ENCODE measurements at regions of chr18 and their contacts with region 1.

Region 1: DNA sequence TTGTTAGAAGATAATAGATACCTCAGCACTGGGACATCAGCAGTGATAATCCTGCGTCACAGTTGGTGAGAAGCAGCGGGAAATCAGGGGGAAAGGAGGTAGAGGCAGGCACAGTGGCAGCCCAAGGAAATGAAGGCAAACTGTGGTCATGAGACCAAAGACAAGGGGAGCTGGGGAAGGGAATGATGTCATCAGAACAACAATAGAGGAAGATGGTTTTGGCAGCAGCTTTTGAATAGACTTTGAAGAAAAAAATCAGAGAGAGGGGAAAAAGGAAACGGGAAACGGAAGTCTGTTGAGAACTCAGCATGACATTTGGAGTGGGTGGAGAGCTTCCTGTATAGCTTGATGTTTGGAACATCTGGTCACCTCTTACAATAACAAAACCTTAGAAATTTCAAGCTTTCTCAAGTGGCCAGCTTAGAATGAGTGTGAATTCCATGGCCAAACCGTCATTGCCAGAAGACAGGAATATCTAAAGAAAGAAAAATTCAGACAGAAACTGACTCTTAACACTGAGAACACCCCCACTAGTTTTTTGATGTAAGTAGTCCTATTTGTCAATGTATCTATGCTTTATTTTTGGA is 18.4 kb upstream of the YES1 start:
- DNase-seq: no peak
- ATAC-seq: peak; percentile 57
- H3K4me3 Mint-ChIP-seq: peak overlapping the region; percentile 43
- H3K27ac Mint-ChIP-seq: peak overlapping the region; percentile 73
- H3K4me1 Mint-ChIP-seq: peaks cover 17% of the 10 kb centered on the region
- H3K27me3 Mint-ChIP-seq: peaks cover 7% of the 10 kb centered on the region

Region 2: DNA sequence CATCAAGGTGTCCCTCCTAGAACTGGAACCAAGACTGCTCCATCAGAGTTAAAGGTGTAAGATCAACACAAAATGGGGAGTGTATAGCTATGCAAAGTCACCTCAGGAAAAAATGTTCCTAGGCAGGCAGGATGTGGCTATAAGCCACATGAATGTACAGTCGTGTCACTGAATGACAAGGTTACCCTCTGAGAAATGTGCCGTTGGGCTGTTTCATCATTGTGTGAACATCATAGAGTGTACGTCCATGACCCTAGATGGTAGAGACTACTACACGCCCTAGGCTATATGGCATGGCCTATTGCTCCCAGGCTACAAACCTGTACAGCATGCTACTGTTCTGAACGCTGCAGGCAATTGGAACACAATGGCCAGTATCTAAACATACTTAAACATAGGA is 148.4 kb before region 1 on chr18:
- CTCF ChIA-PET with region 1: interaction called, 10 read pairs
- DNase-seq: peak; percentile 91
- ATAC-seq: peak; percentile 97
- H3K4me3 Mint-ChIP-seq: peak overlapping the region; percentile 19
- H3K27ac Mint-ChIP-seq: peak overlapping the region; percentile 90
- H3K4me1 Mint-ChIP-seq: peaks cover 35% of the 10 kb centered on the region
- H3K27me3 Mint-ChIP-seq: no peaks in the 10 kb centered on the region

Region 3: DNA sequence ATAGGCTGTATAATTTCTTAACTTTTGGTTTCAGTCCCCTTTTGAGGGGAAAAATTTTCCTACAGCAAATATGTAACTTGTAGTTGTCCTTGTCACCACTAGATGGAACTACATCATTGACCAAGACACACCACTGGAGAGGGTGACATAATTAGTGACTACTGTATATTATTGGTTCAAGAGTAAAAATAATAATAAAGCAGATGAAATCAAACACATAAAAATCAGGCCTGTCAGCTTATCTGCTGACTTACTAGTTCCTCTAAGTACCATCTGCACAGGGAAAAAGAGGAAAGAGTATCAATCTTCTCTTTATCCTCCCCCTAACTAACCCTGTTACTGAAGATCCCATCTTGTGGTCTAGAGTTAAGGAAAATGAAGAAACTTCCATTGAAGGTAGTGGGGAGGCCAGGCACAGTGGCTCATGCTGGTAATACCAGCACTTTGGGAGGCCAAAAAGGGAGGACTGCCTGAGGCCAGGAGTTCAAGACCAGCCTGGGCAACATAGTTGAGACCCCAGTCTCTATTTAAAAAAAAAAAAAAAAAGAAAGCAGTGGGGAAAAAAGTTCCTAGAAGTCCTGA is 88.4 kb before region 1 on chr18:
- CTCF ChIA-PET with region 1: interaction called, 131 read pairs
- DNase-seq: no peak
- ATAC-seq: peak; percentile 78
- H3K4me3 Mint-ChIP-seq: no peak overlapping the region
- H3K27ac Mint-ChIP-seq: peak overlapping the region; percentile 32
- H3K4me1 Mint-ChIP-seq: peaks cover 6% of the 10 kb centered on the region
- H3K27me3 Mint-ChIP-seq: no peaks in the 10 kb centered on the region

Region 4: DNA sequence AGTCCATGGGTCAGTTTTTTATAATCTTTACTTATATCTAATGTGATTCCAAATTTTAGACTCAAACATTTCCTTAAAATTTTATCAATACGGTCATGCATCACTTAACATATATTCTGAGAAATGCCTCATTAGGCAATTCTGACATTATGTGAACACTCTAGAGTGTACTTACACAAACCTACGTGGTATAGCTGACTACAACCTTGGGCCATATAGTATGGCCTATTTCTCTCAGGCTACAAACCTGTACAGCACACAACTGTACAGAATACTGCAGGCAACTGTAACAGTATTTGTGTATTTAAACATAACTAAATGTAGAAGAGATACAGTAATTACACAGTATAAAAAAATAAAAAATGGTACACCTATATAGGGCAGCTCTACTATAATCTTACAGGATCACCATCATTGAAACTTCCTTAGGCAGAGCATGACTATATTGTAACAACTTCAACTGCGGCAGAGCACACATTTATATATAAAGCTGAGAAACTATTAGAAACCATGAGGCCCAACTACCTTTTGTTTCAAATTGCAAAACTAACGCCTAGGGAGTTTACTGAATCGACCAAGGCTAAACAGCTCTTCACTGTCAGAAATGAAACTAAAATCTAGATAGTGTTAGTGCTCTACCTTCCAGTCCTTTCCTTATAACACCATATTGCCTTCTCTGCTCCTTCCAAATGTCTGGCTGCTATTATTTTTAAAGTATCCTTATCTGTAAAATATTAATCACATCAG is 25.2 kb before region 1 on chr18:
- CTCF ChIA-PET with region 1: interaction called, 18 read pairs
- DNase-seq: no peak
- ATAC-seq: peak; percentile 64
- H3K4me3 Mint-ChIP-seq: peak overlapping the region; percentile 69
- H3K27ac Mint-ChIP-seq: peak overlapping the region; percentile 88
- H3K4me1 Mint-ChIP-seq: peaks cover 61% of the 10 kb centered on the region
- H3K27me3 Mint-ChIP-seq: no peaks in the 10 kb centered on the region

Measured in activated CD8-positive, alpha-beta memory T cell treated with anti-CD3 and anti-CD28 coated beads, Interleukin-2, amount 10 ng/mL, durations not matched to agents 7 days and 5 days (primary cell).